GM12878 (cell line): ENCODE measurements at regions of chr20 and their contacts with region 1.

Region 1: GRCh38 chr20:8389381-8390036 is 257.4 kb downstream of the PLCB1 start:
- DNase-seq: no peak
- ATAC-seq: peak; percentile 47; the same call in 2 of the 3 replicates
- H3K4me3 ChIP-seq: no peak overlapping the region
- H3K27ac ChIP-seq: no peak overlapping the region
- H3K4me1 ChIP-seq: no peaks in the 10 kb centered on the region
- H3K27me3 ChIP-seq: no peaks in the 10 kb centered on the region
- CTCF ChIP-seq: peak; percentile 11 to 48 (median 46); a peak in 5 of 6 replicates
- EP300 ChIP-seq: no peak
- POLR2A ChIP-seq: no peak
- RAD21 ChIP-seq: peak; percentile 42; the same call in 1 of the 2 replicates

Region 2: GRCh38 chr20:8043687-8044282 is 345.7 kb before region 1 on chr20:
- CTCF ChIA-PET with region 1: interaction called, 20 read pairs
- POLR2A ChIA-PET with region 1: no interaction called
- RAD21 ChIA-PET with region 1: interaction called, 4 read pairs
- SMC1A ChIA-PET with region 1: interaction called, 6 read pairs
- in situ Hi-C with region 1: no loop called
- intact Hi-C with region 1: loop called (anchors 2 kb)
- DNase-seq: no peak
- ATAC-seq: peak; percentile 86
- H3K4me3 ChIP-seq: no peak overlapping the region
- H3K27ac ChIP-seq: no peak overlapping the region
- H3K4me1 ChIP-seq: no peaks in the 10 kb centered on the region
- H3K27me3 ChIP-seq: no peaks in the 10 kb centered on the region
- CTCF ChIP-seq: peak; percentile 50 to 72 (median 62); a peak in 5 of 6 replicates
- EP300 ChIP-seq: no peak
- POLR2A ChIP-seq: no peak
- RAD21 ChIP-seq: peak; percentile 68

Region 3: GRCh38 chr20:8213831-8214587 is 175.5 kb before region 1 on chr20:
- CTCF ChIA-PET with region 1: no interaction called
- POLR2A ChIA-PET with region 1: no interaction called
- RAD21 ChIA-PET with region 1: no interaction called
- SMC1A ChIA-PET with region 1: no interaction called
- in situ Hi-C with region 1: no loop called
- intact Hi-C with region 1: loop called (anchors 5 kb)
- DNase-seq: peak; percentile 47
- ATAC-seq: peak; percentile 88
- H3K4me3 ChIP-seq: peak overlapping the region; percentile 34; the same call in 1 of the 2 replicates
- H3K27ac ChIP-seq: peak overlapping the region; percentile 30; the same call in 1 of the 2 replicates
- H3K4me1 ChIP-seq: peaks cover 24% of the 10 kb centered on the region; the same call in 1 of the 2 replicates
- H3K27me3 ChIP-seq: no peaks in the 10 kb centered on the region
- CTCF ChIP-seq: no peak
- EP300 ChIP-seq: peak in 1 of 2 experiments; percentile 62; a peak in 1 of 4 replicates
- POLR2A ChIP-seq: no peak
- RAD21 ChIP-seq: no peak

Region 4: GRCh38 chr20:8372824-8373380 is 16.6 kb before region 1 on chr20:
- CTCF ChIA-PET with region 1: interaction called, 22 read pairs
- POLR2A ChIA-PET with region 1: no interaction called
- RAD21 ChIA-PET with region 1: no interaction called
- SMC1A ChIA-PET with region 1: interaction called, 8 read pairs
- in situ Hi-C with region 1: no loop called
- intact Hi-C with region 1: no loop called
- DNase-seq: no peak
- ATAC-seq: no peak
- H3K4me3 ChIP-seq: no peak overlapping the region
- H3K27ac ChIP-seq: no peak overlapping the region
- H3K4me1 ChIP-seq: no peaks in the 10 kb centered on the region
- H3K27me3 ChIP-seq: no peaks in the 10 kb centered on the region
- CTCF ChIP-seq: no peak
- EP300 ChIP-seq: no peak
- POLR2A ChIP-seq: no peak
- RAD21 ChIP-seq: no peak

Region 5: GRCh38 chr20:8404912-8405635 is 15.6 kb after region 1 on chr20:
- CTCF ChIA-PET with region 1: interaction called, 30 read pairs
- POLR2A ChIA-PET with region 1: interaction called, 3 read pairs
- RAD21 ChIA-PET with region 1: interaction called, 6 read pairs
- SMC1A ChIA-PET with region 1: interaction called, 43 read pairs
- in situ Hi-C with region 1: no loop called
- intact Hi-C with region 1: no loop called
- DNase-seq: peak; percentile 54
- ATAC-seq: peak; percentile 70
- H3K4me3 ChIP-seq: no peak overlapping the region
- H3K27ac ChIP-seq: peak overlapping the region; percentile 10; the same call in 1 of the 2 replicates
- H3K4me1 ChIP-seq: peaks cover 12% of the 10 kb centered on the region; the same call in 1 of the 2 replicates
- H3K27me3 ChIP-seq: no peaks in the 10 kb centered on the region
- CTCF ChIP-seq: no peak
- EP300 ChIP-seq: peak; percentile 50 to 65; a peak in 2 of 4 replicates
- POLR2A ChIP-seq: no peak
- RAD21 ChIP-seq: no peak

Region 6: GRCh38 chr20:8454137-8454712 is 64.7 kb after region 1 on chr20:
- CTCF ChIA-PET with region 1: interaction called, 9 read pairs
- POLR2A ChIA-PET with region 1: no interaction called
- RAD21 ChIA-PET with region 1: interaction called, 4 read pairs
- SMC1A ChIA-PET with region 1: interaction called, 5 read pairs
- in situ Hi-C with region 1: no loop called
- intact Hi-C with region 1: loop called (anchors 2 kb)
- DNase-seq: peak; percentile 17
- ATAC-seq: peak; percentile 87
- H3K4me3 ChIP-seq: no peak overlapping the region
- H3K27ac ChIP-seq: no peak overlapping the region
- H3K4me1 ChIP-seq: no peaks in the 10 kb centered on the region
- H3K27me3 ChIP-seq: no peaks in the 10 kb centered on the region
- CTCF ChIP-seq: peak; percentile 52 to 57 (median 52)
- EP300 ChIP-seq: no peak
- POLR2A ChIP-seq: no peak
- RAD21 ChIP-seq: peak; percentile 74